ENCODE measurements at regions of chr6 and their contacts with region 1.

Region 1: DNA sequence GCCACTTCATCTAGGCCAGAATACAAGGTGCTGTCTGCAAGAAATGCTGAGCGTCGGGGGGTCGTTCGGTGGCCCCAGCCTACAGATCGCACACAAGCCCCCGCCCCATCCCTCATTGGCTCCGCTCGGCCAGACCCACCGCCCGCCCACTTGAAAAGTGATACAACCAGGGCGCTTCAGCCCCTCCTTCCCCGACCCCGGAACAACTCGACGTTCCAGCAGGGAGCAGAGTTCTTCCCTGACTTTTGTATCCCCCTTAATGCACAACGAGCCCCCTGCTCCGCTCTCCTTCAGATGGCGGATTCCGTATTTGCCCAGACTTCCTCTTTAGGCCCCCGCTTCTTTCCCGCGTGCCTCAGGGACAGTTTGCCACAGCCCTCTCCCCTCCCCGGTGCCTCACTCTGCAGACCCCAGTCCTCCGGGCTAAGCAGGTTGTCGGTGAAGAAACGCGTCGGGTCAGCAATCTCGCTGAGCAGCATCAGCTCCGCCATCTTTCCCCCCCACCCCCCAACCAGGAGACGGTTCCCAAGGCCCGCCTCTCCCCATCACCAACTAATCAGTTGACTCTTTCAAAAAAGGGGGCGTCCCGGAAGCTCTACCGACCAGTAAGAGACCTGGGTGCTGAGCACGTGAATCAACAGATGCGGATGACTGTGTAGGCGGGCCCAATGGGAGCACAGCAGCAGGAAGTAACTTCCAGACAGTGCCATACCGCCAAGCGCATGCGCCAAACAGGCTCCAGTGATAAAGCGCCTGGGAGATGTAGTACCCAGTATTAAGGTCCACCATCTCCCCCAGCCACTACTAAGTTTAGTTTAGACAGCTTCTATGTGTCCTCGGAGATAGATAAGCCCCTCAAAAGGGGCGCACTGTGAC is at the start of gene ATF6B:
- DNase-seq: peak; percentile 100
- H3K4me3 ChIP-seq: peak within 1 kb of the TSS; percentile 87 to 90
- H3K27ac ChIP-seq: peak within 1 kb of the TSS; percentile 92 to 99
- H3K4me1 ChIP-seq: peaks cover 23% of the 10 kb centered on the region
- H3K27me3 ChIP-seq: no peaks in the 10 kb centered on the region
- CTCF ChIP-seq: no peak
- POLR2A ChIP-seq: no peak
- total RNA-seq, gene ATF6B: 120 to 138 TPM

Region 2: DNA sequence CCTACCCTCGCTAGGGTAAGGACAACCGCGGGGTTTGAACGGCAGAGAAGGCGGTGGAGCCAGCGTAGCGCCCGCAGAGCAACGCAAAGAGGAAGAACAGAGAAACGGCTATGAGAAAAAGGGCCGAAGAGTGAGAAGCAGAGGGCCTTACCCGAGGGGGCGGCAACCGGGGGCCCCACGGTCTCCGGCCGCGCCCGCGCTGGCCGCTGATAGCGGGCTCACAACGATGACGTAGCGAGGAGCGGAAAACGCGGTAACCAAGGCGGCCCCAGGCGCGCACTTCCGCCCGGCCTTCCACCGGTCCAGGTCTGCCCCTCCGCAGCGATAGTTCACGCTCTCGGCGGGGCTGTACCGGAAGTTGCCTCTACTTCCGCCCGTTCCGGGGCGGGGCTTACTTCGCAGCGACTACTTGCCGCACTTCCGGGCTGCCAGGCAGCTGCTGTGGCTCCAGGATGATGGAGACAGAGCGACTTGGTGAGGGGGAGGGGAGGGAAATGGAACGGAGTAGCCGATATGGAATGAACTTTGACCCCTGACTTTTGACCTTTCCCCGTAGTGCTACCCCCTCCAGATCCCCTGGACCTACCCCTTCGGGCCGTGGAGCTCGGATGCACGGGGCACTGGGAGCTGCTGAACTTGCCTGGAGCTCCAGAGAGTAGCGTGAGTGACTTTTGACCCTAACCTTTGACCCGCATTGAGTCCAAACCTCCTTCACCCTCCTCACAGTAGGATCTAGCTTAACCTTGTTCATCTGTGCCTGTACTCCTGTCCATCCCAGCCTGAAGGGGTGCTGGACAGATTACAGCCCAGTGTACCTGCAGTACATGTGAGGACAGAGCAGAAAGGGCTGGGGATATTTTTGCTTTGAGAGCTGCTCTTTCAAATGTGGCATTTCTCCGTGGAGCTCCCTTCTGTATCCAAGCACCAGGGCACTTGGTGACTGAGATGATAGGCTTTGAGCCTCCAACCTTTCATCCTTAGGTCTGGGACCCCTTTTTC is 168.9 kb before region 1 on chr6 and contains the starts of genes NELFE and SKIC2:
- intact Hi-C with region 1: loop called (anchors 10 kb)
- DNase-seq: peak; percentile 98
- H3K4me3 ChIP-seq: peak within 1 kb of the TSS; percentile 66 to 90
- H3K27ac ChIP-seq: peak within 1 kb of the TSS; percentile 67 to 84
- H3K4me1 ChIP-seq: peaks cover 12% of the 10 kb centered on the region
- H3K27me3 ChIP-seq: no peaks in the 10 kb centered on the region
- CTCF ChIP-seq: peak in 1 of 3 experiments; percentile 6
- POLR2A ChIP-seq: peak; percentile 26
- total RNA-seq, gene NELFE: 181 to 219 TPM
- total RNA-seq, gene SKIC2: 59.2 to 73.0 TPM

Region 3: GRCh38 chr6:32558426-32559057 is 430.6 kb after region 1 on chr6:
- intact Hi-C with region 1: no loop called
- DNase-seq: no peak
- H3K4me3 ChIP-seq: no peak overlapping the region
- H3K27ac ChIP-seq: no peak overlapping the region
- H3K4me1 ChIP-seq: no peaks in the 10 kb centered on the region
- H3K27me3 ChIP-seq: no peaks in the 10 kb centered on the region
- CTCF ChIP-seq: no peak
- POLR2A ChIP-seq: no peak

Region 4: DNA sequence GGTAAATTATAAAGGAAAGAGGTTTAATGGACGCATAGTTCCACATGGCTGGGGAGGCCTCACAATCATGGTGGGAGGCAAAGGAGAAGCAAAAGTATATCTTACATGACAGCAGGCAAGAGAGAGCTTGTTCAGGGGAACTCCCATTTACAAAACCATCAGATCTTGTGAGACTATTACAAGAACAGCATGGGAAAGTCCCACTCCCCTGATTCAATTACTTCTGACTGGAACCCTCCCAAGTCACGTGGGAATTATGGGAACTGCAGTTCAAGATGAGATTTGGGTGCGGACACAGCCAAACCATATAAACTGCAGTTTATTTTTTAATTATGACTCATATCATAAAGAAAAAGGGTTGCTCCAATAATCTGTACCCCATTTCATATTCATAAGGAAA is 590.9 kb after region 1 on chr6:
- intact Hi-C with region 1: no loop called
- DNase-seq: no peak
- H3K4me3 ChIP-seq: no peak overlapping the region
- H3K27ac ChIP-seq: no peak overlapping the region
- H3K4me1 ChIP-seq: no peaks in the 10 kb centered on the region
- H3K27me3 ChIP-seq: no peaks in the 10 kb centered on the region
- CTCF ChIP-seq: no peak
- POLR2A ChIP-seq: no peak